GM23248 (cell line): ENCODE measurements at regions of chr7 and their contacts with region 1.

Region 1: GRCh38 chr7:106176414-106177299 is 64.5 kb upstream of the SYPL1 start:
- DNase-seq: peak; percentile 87
- H3K4me3 ChIP-seq: no peak overlapping the region
- H3K27ac ChIP-seq: no peak overlapping the region
- H3K4me1 ChIP-seq: no peaks in the 10 kb centered on the region
- H3K27me3 ChIP-seq: no peaks in the 10 kb centered on the region; the same call in 1 of the 2 replicates

Region 2: DNA sequence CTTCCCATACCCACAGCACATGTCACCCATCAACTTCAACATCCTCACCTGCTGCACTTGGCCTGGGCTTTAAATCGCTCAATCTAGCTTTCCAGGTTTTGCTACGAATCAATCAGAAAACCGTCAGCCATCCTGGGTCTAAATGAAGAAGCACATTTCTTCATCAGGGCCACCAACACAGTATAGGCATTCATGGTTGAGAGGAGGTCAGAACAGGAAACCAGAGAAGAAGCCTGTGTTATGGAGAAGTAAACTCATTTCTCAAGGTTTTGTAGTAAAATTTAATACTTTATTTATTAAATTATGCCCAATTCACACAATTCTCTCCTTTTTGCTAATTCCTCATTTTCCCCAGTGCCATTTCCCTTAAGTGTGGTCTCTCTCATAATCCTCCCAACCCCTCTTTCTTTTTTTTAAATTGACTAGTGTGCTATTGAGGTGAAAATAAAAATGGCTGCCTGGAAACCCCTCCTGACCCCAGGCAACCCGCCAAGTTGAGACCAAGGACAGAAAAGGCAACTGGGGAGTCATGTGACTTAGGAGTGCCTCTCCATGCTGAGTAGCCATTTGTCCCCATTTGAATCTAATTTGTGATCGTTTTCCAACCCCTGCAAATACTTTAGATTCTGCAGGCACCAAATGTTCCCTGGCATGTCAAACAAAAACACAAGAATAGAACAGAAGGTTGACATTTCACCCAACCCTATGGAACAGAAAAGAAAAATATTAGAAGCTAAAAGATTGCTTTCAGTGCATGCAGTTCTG is 289.2 kb after region 1 on chr7:
- in situ Hi-C with region 1: loop called (anchors 5 kb)
- DNase-seq: no peak
- H3K4me3 ChIP-seq: no peak overlapping the region
- H3K27ac ChIP-seq: no peak overlapping the region
- H3K4me1 ChIP-seq: no peaks in the 10 kb centered on the region
- H3K27me3 ChIP-seq: no peaks in the 10 kb centered on the region

Region 3: DNA sequence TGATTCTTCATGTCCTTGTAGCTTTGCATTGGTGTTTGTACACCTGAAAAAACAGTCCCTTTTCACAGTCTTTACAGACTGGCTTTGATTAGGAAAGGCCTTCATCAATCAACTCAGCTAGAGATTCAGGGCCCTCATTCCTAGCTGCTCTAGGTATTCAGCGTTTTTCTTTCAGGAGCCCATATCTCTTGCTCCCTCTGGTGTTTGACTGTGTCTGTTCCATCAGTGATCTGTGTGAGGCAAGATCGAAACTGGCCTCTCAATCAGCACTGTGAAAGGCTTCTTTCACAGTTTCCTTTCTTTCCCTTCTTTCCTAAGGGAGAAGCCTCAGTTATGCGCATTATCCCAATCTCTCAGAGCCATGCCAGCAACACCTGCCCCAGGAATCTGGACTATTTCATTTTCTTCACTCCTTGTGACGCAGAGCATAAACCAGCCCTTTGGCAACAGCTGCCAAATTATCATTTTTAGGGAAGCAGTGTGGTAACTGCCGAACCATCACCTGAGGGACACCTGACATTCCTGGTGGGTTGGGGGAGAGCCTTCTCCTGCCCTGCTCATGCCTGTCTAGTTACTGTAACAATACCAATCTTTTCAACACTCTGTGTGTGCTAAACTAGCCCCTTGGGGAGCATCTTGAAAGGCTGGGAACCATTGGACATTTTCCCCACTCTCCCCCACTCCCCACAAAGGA is 560.0 kb after region 1 on chr7:
- in situ Hi-C with region 1: loop called (anchors 10 kb)
- DNase-seq: peak; percentile 85
- H3K4me3 ChIP-seq: peak overlapping the region; percentile 19
- H3K27ac ChIP-seq: peak overlapping the region; percentile 56
- H3K4me1 ChIP-seq: peaks cover 17% of the 10 kb centered on the region
- H3K27me3 ChIP-seq: no peaks in the 10 kb centered on the region